Ovary (tissue), 10 donors: ENCODE measurements at regions of chr16 and their contacts with region 1.

Region 1: GRCh38 chr16:5412728-5413127 is 315.1 kb upstream of the EEF2KMT start:
- DNase-seq: no peak
- H3K4me3 ChIP-seq: no peak overlapping the region
- H3K27ac ChIP-seq: no peak overlapping the region
- H3K4me1 ChIP-seq: no peaks in the 10 kb centered on the region
- H3K27me3 ChIP-seq: no peaks in the 10 kb centered on the region
- CTCF ChIP-seq: no peak
- EP300 ChIP-seq: no peak
- POLR2A ChIP-seq: no peak

Region 2: GRCh38 chr16:5349670-5350517 is 62.8 kb before region 1 on chr16:
- intact Hi-C with region 1: loop called in 1 of 4 experiments (anchors 10 kb)
- DNase-seq: no peak
- H3K4me3 ChIP-seq: no peak overlapping the region
- H3K27ac ChIP-seq: no peak overlapping the region
- H3K4me1 ChIP-seq: no peaks in the 10 kb centered on the region
- H3K27me3 ChIP-seq: no peaks in the 10 kb centered on the region
- CTCF ChIP-seq: no peak
- EP300 ChIP-seq: no peak
- POLR2A ChIP-seq: no peak